WTC11 (cell line): ENCODE measurements at regions of chr1 and their contacts with region 1.

Region 1: GRCh38 chr1:221263831-221264767 is 384.9 kb downstream of the HLX start:
- DNase-seq: peak; percentile 51
- ATAC-seq: peak; percentile 94
- H3K4me3 Mint-ChIP-seq: no peak overlapping the region
- H3K27ac Mint-ChIP-seq: no peak overlapping the region
- H3K4me1 Mint-ChIP-seq: peaks cover 18% of the 10 kb centered on the region
- H3K27me3 Mint-ChIP-seq: no peaks in the 10 kb centered on the region
- CTCF ChIP-seq: peak; percentile 39; the same call in 1 of the 2 replicates

Region 2: GRCh38 chr1:221435504-221435904 is 171.4 kb after region 1 on chr1:
- CTCF ChIA-PET with region 1: interaction called, 40 read pairs
- POLR2A ChIA-PET with region 1: no interaction called
- DNase-seq: no peak
- ATAC-seq: peak; percentile 75
- H3K4me3 Mint-ChIP-seq: no peak overlapping the region
- H3K27ac Mint-ChIP-seq: no peak overlapping the region
- H3K4me1 Mint-ChIP-seq: peaks cover 14% of the 10 kb centered on the region
- H3K27me3 Mint-ChIP-seq: no peaks in the 10 kb centered on the region
- CTCF ChIP-seq: peak; percentile 88